Heart left ventricle (tissue), 16 donors: ENCODE measurements at regions of chr16 and their contacts with region 1.

Region 1: DNA sequence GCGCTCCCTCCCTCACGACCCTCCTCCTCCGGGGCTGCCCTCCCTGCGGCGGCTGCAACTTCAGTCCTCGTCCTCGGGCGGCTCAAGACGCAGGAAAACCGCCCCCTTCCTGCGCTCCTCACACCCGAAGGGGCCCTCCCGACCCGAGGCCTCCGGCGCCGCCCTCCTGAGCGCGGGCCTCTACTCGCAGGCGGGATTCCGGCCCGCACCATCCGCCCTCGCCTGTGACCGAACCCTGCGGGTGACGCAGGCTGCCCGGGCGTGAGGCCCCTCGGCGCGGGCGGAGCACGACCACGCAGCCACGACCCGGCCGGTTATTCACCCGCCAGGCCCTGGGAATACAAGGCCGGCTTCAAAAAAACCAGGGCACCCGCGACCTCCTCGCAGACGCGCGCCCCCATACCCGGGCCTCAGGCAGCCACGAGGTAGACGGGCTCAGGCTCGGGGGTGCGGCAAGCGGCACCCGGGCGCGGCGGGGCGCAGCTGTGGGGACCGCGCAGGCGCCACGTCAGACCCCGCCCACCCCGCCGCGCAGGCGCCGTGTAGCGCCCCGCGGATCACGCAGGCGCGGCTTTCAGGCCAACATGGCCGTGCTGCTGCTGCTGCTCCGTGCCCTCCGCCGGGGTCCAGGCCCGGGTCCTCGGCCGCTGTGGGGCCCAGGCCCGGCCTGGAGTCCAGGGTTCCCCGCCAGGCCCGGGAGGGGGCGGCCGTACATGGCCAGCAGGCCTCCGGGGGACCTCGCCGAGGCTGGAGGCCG is at the start of gene SPG7:
- DNase-seq: peak; percentile 88 to 95 (median 89)
- ATAC-seq: peak; percentile 74 to 94 (median 88)
- H3K4me3 ChIP-seq: peak within 1 kb of the TSS; percentile 57 to 98 (median 95)
- H3K27ac ChIP-seq: peak within 1 kb of the TSS; percentile 89 to 100 (median 97)
- H3K4me1 ChIP-seq: peaks cover 4 to 49% (median 37%) of the 10 kb centered on the region in 12 donors
- H3K27me3 ChIP-seq: no peaks in the 10 kb centered on the region
- CTCF ChIP-seq: peak in 2 of 12 donors; percentile 4 to 8
- POLR2A ChIP-seq: peak; percentile 43 to 97
- total RNA-seq, gene SPG7: 84.0 to 168 (median 95.9) TPM

Region 2: GRCh38 chr16:89319883-89320781 is 187.9 kb before region 1 on chr16:
- intact Hi-C with region 1: loop called in 1 of 10 experiments (anchors 5 kb)
- DNase-seq: peak in 4 of 5 donors; percentile 45 to 79 (median 66)
- ATAC-seq: peak; percentile 23 to 74 (median 68)
- H3K4me3 ChIP-seq: peak overlapping the region in 9 of 12 donors; percentile 1 to 31 (median 19)
- H3K27ac ChIP-seq: peak overlapping the region; percentile 24 to 93 (median 80)
- H3K4me1 ChIP-seq: peaks cover 33 to 99% (median 94%) of the 10 kb centered on the region in 12 donors
- H3K27me3 ChIP-seq: no peaks in the 10 kb centered on the region
- CTCF ChIP-seq: no peak
- POLR2A ChIP-seq: no peak

Region 3: DNA sequence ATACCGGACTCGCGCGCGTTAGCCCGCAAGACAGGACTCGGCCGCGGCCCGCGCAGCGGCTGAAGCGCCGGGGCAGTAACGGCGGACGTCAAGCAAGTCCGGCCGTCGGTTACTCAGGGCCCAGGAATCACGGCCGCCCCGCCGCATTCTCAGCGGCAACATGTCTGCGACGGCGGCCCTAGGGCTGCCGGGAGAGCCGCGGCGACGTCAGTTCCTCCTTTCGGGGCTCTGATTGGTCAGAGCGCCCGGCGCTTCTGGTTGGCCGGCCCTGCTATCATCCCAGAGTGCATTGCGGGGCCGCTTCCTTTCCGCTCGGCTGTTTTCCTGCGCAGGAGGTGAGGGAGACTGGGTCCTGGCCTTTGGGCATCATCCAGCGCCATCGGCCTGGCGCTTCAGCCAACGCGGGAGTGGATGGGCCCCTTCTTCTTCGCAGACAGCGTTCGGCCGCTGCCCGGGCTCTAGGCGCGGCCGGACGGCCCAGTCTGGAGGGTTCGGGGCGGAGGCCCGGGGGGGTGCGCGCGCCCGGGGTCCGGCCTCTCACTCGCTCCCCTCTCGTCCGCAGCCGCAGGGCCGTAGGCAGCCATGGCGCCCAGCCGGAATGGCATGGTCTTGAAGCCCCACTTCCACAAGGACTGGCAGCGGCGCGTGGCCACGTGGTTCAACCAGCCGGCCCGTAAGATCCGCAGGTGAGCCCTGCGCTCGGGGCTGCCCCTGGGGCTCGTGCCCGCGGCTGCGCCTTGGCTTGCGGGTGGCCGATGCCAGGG is 52.5 kb after region 1 on chr16 and contains the start of gene RPL13:
- intact Hi-C with region 1: loop called in 1 of 10 experiments (anchors 5 kb)
- DNase-seq: peak; percentile 95 to 97 (median 96)
- ATAC-seq: peak; percentile 94 to 97 (median 96)
- H3K4me3 ChIP-seq: peak within 1 kb of the TSS; percentile 33 to 97 (median 84)
- H3K27ac ChIP-seq: peak within 1 kb of the TSS; percentile 88 to 99 (median 95)
- H3K4me1 ChIP-seq: peaks cover 8 to 64% (median 30%) of the 10 kb centered on the region in 12 donors
- H3K27me3 ChIP-seq: no peaks in the 10 kb centered on the region
- CTCF ChIP-seq: peak in 1 of 12 donors; percentile 6
- POLR2A ChIP-seq: peak; percentile 68 to 97
- total RNA-seq, gene RPL13: 701 to 3,315 (median 1,152) TPM

Region 4: DNA sequence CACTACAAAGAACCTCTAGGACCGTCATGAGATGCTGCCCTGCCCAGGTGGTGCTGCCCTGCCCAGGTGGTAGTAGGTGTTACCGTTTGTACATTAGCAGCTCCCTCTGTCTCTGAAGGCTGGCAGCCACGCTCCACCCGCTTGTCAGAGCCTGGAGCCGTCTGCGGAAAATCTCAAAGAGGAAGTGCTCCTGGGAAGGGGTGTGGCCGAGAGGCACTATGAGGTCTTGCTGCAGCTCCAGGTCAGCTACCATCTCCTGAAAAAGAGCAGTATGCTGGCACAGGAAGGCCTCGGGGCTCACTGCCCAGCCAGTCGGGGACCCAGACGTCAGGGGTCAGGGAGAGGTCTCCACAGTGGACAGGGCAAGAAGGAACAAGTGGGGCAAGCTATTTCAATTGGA is 241.6 kb after region 1 on chr16:
- intact Hi-C with region 1: loop called in 1 of 10 experiments (anchors 10 kb)
- DNase-seq: peak in 3 of 5 donors; percentile 28 to 40 (median 39)
- ATAC-seq: peak in 3 of 4 donors; percentile 32 to 42 (median 40)
- H3K4me3 ChIP-seq: no peak overlapping the region
- H3K27ac ChIP-seq: no peak overlapping the region
- H3K4me1 ChIP-seq: peaks cover 0 to 9% (median 0%) of the 10 kb centered on the region in 12 donors
- H3K27me3 ChIP-seq: no peaks in the 10 kb centered on the region
- CTCF ChIP-seq: no peak
- POLR2A ChIP-seq: no peak